ENCODE measurements at regions of chr21 and their contacts with region 1.

Region 1: GRCh38 chr21:36235058-36235582 is 78.5 kb downstream of the DOP1B start:
- DNase-seq: no peak
- ATAC-seq: no peak
- H3K4me3 Mint-ChIP-seq: no peak overlapping the region
- H3K27ac Mint-ChIP-seq: no peak overlapping the region
- H3K4me1 Mint-ChIP-seq: peaks cover 33% of the 10 kb centered on the region
- H3K27me3 Mint-ChIP-seq: no peaks in the 10 kb centered on the region
- CTCF ChIP-seq: no peak

Region 2: DNA sequence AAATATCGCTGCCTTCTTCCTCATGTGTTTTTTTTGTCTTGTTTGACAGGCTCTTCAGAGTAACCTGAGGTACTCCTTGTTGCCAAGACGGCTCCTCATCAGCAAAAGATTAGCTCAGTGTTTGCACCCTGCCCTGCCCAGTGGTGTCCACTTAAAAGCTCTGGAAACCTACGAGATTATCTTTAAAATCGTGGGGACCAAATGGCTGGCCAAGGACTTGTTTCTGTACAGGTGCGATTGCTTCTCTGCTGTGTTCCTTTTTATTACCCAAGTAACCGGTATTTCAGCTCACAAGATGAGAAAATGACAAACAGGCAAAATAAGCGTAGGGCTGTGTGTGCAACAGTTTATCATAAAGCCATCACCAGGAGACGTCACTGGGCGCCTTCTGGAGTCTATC is 36.1 kb before region 1 on chr21:
- CTCF ChIA-PET with region 1: no interaction called
- POLR2A ChIA-PET with region 1: no interaction called
- intact Hi-C with region 1: loop called (anchors 5 kb)
- DNase-seq: no peak
- ATAC-seq: no peak
- H3K4me3 Mint-ChIP-seq: no peak overlapping the region
- H3K27ac Mint-ChIP-seq: no peak overlapping the region
- H3K4me1 Mint-ChIP-seq: peaks cover 8% of the 10 kb centered on the region
- H3K27me3 Mint-ChIP-seq: no peaks in the 10 kb centered on the region
- CTCF ChIP-seq: no peak

Region 3: DNA sequence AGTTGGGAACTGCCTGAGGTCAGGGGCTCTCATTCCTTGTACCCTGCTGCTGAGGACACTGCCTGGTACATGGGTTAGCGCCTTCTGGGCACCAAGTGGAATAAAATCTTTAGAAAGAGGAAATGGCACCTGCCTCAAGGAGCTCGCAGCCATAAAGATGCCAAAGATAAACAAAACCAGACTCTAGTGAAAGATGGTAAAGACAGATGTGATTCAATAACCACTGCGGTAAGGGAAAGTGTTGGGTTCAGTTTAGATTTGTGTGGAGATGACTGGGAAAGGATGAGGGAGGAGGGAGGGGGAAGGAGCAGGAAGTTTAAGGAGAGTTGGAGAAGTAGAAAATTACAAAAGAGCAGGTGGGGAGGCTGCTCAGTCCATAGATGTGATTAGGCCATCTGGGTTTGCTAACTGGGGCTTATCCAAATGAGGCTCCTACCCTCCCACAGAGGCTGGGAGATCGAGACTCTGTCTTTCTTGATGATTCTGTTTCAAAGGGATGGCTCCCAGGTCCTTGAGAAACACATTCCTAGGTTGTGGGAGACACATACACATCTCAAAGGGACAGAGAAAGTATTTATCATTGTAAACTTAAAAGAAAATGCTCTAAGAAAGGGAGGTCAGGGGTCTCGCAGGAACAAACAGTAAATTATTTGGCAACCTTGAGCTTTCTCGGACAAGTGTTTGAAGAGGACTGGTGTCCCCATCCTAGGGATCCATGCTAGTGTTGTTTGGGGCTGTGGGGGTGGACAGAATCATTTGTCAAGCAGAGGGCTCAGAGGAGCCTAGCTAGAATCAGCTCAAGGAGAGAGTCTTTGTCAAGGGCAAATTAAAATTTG is 19.2 kb after region 1 on chr21:
- CTCF ChIA-PET with region 1: no interaction called
- POLR2A ChIA-PET with region 1: interaction called, 30 read pairs
- intact Hi-C with region 1: loop called (anchors 1 kb)
- DNase-seq: no peak
- ATAC-seq: peak; percentile 46
- H3K4me3 Mint-ChIP-seq: peak overlapping the region; percentile 84
- H3K27ac Mint-ChIP-seq: peak overlapping the region; percentile 88
- H3K4me1 Mint-ChIP-seq: peaks cover 69% of the 10 kb centered on the region
- H3K27me3 Mint-ChIP-seq: no peaks in the 10 kb centered on the region
- CTCF ChIP-seq: no peak

Region 4: GRCh38 chr21:36265431-36265830 is 30.3 kb after region 1 on chr21:
- CTCF ChIA-PET with region 1: no interaction called
- POLR2A ChIA-PET with region 1: interaction called, 12 read pairs
- intact Hi-C with region 1: no loop called
- DNase-seq: no peak
- ATAC-seq: no peak
- H3K4me3 Mint-ChIP-seq: no peak overlapping the region
- H3K27ac Mint-ChIP-seq: peak overlapping the region; percentile 20
- H3K4me1 Mint-ChIP-seq: peaks cover 51% of the 10 kb centered on the region
- H3K27me3 Mint-ChIP-seq: no peaks in the 10 kb centered on the region
- CTCF ChIP-seq: no peak

Region 5: GRCh38 chr21:36319765-36320420 is 84.8 kb after region 1 on chr21 and contains the start of gene MORC3:
- CTCF ChIA-PET with region 1: interaction called, 3 read pairs
- POLR2A ChIA-PET with region 1: interaction called, 21 read pairs
- intact Hi-C with region 1: loop called (anchors 1 kb)
- DNase-seq: peak; percentile 98
- ATAC-seq: peak; percentile 88
- H3K4me3 Mint-ChIP-seq: peak within 1 kb of the TSS; percentile 97
- H3K27ac Mint-ChIP-seq: peak within 1 kb of the TSS; percentile 97
- H3K4me1 Mint-ChIP-seq: peaks cover 50% of the 10 kb centered on the region
- H3K27me3 Mint-ChIP-seq: no peaks in the 10 kb centered on the region
- CTCF ChIP-seq: no peak
- total RNA-seq, gene MORC3: 55.4 and 65.6 TPM in 2 replicates

Measured in activated B cell treated with CpG ODN at 0.5 μM for 24 hours (primary cell).